Caco-2 (cell line): ENCODE measurements at regions of chr13 and their contacts with region 1.

Region 1: GRCh38 chr13:95834134-95834765 is 157.3 kb downstream of the DNAJC3 start:
- DNase-seq: peak; percentile 69 to 77
- H3K4me3 ChIP-seq: no peak overlapping the region
- H3K4me3 Mint-ChIP-seq: no peak overlapping the region
- H3K27ac Mint-ChIP-seq: no peak overlapping the region
- H3K4me1 ChIP-seq: no peaks in the 10 kb centered on the region
- H3K4me1 Mint-ChIP-seq: no peaks in the 10 kb centered on the region
- H3K27me3 ChIP-seq: no peaks in the 10 kb centered on the region
- H3K27me3 Mint-ChIP-seq: no peaks in the 10 kb centered on the region
- CTCF ChIP-seq: peak; percentile 92 to 94

Region 2: DNA sequence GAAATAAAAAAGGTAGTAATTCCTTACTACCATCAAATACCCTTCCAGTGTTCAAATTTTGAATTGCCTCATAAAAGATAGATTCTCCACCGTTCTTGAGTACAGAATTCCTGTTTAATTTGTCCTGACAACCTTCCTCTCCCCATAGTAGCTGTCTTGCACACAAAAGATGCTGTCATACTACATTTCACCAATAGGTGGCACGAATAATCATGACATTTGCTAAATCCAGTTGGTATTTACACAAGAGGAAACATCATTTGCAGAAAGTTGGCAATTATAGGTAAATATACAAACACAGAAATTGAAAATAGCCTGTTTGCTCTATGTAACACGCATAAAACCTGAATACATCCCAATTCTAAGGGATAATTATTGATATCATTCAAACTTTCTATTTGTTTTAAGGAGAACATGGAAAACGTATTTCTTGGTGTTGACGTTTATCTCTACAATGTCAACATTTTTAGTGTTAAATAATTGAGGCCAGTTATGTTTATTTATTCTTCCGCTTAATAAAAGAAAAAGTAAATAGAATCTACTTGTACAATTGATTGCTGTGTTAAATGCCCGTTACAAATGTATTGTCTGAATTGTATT is 340.1 kb before region 1 on chr13:
- CTCF ChIA-PET with region 1: no interaction called
- POLR2A ChIA-PET with region 1: no interaction called
- intact Hi-C with region 1: loop called (anchors 1 kb)
- DNase-seq: peak in 1 of 2 experiments; percentile 66
- H3K4me3 ChIP-seq: no peak overlapping the region
- H3K4me3 Mint-ChIP-seq: no peak overlapping the region
- H3K27ac Mint-ChIP-seq: no peak overlapping the region
- H3K4me1 ChIP-seq: peaks cover 9% of the 10 kb centered on the region
- H3K4me1 Mint-ChIP-seq: peaks cover 8% of the 10 kb centered on the region
- H3K27me3 ChIP-seq: no peaks in the 10 kb centered on the region
- H3K27me3 Mint-ChIP-seq: no peaks in the 10 kb centered on the region
- CTCF ChIP-seq: peak; percentile 48 to 73

Region 3: DNA sequence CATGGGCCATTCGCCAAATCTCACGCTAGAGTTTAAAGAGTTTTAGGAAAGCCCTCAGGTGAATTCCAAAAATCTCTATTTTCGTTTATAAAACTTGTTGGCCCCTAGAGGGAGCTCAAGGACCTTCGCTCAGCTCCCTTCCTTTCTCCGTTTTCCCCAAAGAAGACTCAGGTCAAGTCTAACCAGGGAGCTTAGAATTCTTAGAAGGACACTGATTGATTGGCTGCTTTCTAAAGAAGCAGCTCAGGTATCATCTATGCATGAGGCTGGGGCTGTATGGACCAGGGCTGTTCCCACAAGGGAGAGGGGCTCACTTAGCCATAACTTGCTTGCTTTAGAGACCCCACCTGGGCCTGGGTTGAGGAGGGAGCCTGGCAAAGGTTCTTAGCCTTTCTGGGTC is 210.2 kb before region 1 on chr13:
- CTCF ChIA-PET with region 1: interaction called, 43 read pairs
- POLR2A ChIA-PET with region 1: no interaction called
- intact Hi-C with region 1: loop called (anchors 1 kb)
- DNase-seq: peak in 1 of 2 experiments; percentile 68
- H3K4me3 ChIP-seq: no peak overlapping the region
- H3K4me3 Mint-ChIP-seq: no peak overlapping the region
- H3K27ac Mint-ChIP-seq: no peak overlapping the region
- H3K4me1 ChIP-seq: no peaks in the 10 kb centered on the region
- H3K4me1 Mint-ChIP-seq: no peaks in the 10 kb centered on the region
- H3K27me3 ChIP-seq: no peaks in the 10 kb centered on the region
- H3K27me3 Mint-ChIP-seq: no peaks in the 10 kb centered on the region
- CTCF ChIP-seq: peak; percentile 75 to 82

Region 4: GRCh38 chr13:95676762-95677563 is 157.3 kb before region 1 on chr13 and contains the start of gene DNAJC3:
- CTCF ChIA-PET with region 1: interaction called, 4 read pairs
- POLR2A ChIA-PET with region 1: no interaction called
- intact Hi-C with region 1: loop called (anchors 1 kb)
- DNase-seq: peak; percentile 99
- H3K4me3 ChIP-seq: peak within 1 kb of the TSS; percentile 82
- H3K4me3 Mint-ChIP-seq: peak within 1 kb of the TSS; percentile 89
- H3K27ac Mint-ChIP-seq: peak within 1 kb of the TSS; percentile 95
- H3K4me1 ChIP-seq: peaks cover 17% of the 10 kb centered on the region; the same call in 1 of the 2 replicates
- H3K4me1 Mint-ChIP-seq: peaks cover 27% of the 10 kb centered on the region
- H3K27me3 ChIP-seq: no peaks in the 10 kb centered on the region
- H3K27me3 Mint-ChIP-seq: no peaks in the 10 kb centered on the region
- CTCF ChIP-seq: no peak
- total RNA-seq, gene DNAJC3: 36.8 and 38.0 TPM in 2 replicates

Region 5: GRCh38 chr13:95982144-95982543 is 147.9 kb after region 1 on chr13:
- CTCF ChIA-PET with region 1: no interaction called
- POLR2A ChIA-PET with region 1: no interaction called
- intact Hi-C with region 1: loop called (anchors 1 kb)
- DNase-seq: no peak
- H3K4me3 ChIP-seq: no peak overlapping the region
- H3K4me3 Mint-ChIP-seq: no peak overlapping the region
- H3K27ac Mint-ChIP-seq: no peak overlapping the region
- H3K4me1 ChIP-seq: no peaks in the 10 kb centered on the region
- H3K4me1 Mint-ChIP-seq: no peaks in the 10 kb centered on the region
- H3K27me3 ChIP-seq: no peaks in the 10 kb centered on the region
- H3K27me3 Mint-ChIP-seq: no peaks in the 10 kb centered on the region
- CTCF ChIP-seq: no peak